Natural killer cell (primary cell): ENCODE measurements at regions of chr18 and their contacts with region 1.

Region 1: GRCh38 chr18:46173393-46174341 is 69.5 kb downstream of the HAUS1 start:
- DNase-seq: peak; percentile 90 to 95
- ATAC-seq: peak; percentile 85 to 97 (median 92)
- H3K4me3 ChIP-seq: peak overlapping the region; percentile 95
- H3K4me3 Mint-ChIP-seq: peak overlapping the region; percentile 100
- H3K27ac ChIP-seq: peak overlapping the region; percentile 80
- H3K27ac Mint-ChIP-seq: peak overlapping the region; percentile 96 to 99
- H3K4me1 ChIP-seq: peaks cover 28% of the 10 kb centered on the region
- H3K4me1 Mint-ChIP-seq: peaks cover 30 to 39% of the 10 kb centered on the region in 2 donors
- H3K27me3 ChIP-seq: no peaks in the 10 kb centered on the region
- H3K27me3 Mint-ChIP-seq: no peaks in the 10 kb centered on the region
- CTCF ChIP-seq: peak; percentile 94

Region 2: DNA sequence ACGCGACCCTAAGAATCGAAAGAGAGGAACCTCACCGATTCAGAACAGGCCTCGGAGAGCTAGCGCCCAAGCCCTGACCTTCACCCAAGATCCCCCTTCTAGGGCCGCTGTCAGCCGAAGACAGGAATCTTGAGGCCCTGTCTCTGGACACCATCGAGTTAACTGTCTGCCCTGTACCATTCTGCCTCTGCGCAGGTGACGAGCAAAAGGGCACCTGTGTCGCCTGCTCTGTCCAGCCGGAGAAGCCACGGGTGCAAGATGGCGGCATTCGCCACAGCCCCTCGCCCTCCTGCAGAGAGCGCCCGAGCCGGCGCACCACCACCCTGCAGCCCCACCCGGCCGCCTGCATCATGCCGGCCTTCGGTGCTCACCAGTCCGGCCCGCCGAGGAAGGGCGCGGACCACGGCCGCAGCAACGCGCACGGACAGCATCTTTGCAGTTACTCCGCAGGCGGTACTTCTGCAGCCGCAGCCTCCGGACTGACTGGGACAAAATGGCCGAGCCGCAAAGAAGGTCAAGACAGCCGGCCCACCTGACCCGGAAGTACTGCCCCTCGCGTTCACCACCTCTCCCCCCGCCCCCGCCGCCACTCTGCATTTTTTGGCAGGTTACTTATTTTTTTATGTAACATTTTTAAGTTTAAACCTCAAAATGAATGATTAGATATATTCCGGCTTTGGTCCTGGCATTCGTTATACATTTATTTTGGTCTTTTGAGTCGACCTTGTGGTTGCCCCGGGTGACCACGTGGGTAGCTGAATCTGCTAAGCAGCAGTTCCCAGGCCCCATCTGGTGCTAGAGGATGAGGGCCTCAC is 75.7 kb before region 1 on chr18 and contains the start of gene ATP5F1A:
- intact Hi-C with region 1: loop called (anchors 10 kb)
- DNase-seq: peak; percentile 84 to 92
- ATAC-seq: peak; percentile 90 to 94 (median 90)
- H3K4me3 ChIP-seq: peak within 1 kb of the TSS; percentile 71
- H3K4me3 Mint-ChIP-seq: peak within 1 kb of the TSS; percentile 98
- H3K27ac ChIP-seq: peak within 1 kb of the TSS; percentile 81
- H3K27ac Mint-ChIP-seq: peak within 1 kb of the TSS; percentile 94 to 95
- H3K4me1 ChIP-seq: peaks cover 25% of the 10 kb centered on the region
- H3K4me1 Mint-ChIP-seq: peaks cover 25 to 27% of the 10 kb centered on the region in 2 donors
- H3K27me3 ChIP-seq: no peaks in the 10 kb centered on the region
- H3K27me3 Mint-ChIP-seq: no peaks in the 10 kb centered on the region
- CTCF ChIP-seq: no peak
- total RNA-seq, gene ATP5F1A: 209 to 218 (median 218) TPM

Region 3: GRCh38 chr18:46213295-46213694 is 39.6 kb after region 1 on chr18:
- intact Hi-C with region 1: loop called (anchors 1 kb)
- DNase-seq: peak in 1 of 2 donors; percentile 61
- ATAC-seq: peak; percentile 65 to 73 (median 71)
- H3K4me3 ChIP-seq: no peak overlapping the region
- H3K4me3 Mint-ChIP-seq: peak overlapping the region; percentile 52
- H3K27ac ChIP-seq: no peak overlapping the region
- H3K27ac Mint-ChIP-seq: peak overlapping the region in 1 of 2 donors; percentile 63
- H3K4me1 ChIP-seq: peaks cover 12% of the 10 kb centered on the region
- H3K4me1 Mint-ChIP-seq: peaks cover 60 to 69% of the 10 kb centered on the region in 2 donors
- H3K27me3 ChIP-seq: no peaks in the 10 kb centered on the region
- H3K27me3 Mint-ChIP-seq: no peaks in the 10 kb centered on the region
- CTCF ChIP-seq: peak; percentile 71

Region 4: DNA sequence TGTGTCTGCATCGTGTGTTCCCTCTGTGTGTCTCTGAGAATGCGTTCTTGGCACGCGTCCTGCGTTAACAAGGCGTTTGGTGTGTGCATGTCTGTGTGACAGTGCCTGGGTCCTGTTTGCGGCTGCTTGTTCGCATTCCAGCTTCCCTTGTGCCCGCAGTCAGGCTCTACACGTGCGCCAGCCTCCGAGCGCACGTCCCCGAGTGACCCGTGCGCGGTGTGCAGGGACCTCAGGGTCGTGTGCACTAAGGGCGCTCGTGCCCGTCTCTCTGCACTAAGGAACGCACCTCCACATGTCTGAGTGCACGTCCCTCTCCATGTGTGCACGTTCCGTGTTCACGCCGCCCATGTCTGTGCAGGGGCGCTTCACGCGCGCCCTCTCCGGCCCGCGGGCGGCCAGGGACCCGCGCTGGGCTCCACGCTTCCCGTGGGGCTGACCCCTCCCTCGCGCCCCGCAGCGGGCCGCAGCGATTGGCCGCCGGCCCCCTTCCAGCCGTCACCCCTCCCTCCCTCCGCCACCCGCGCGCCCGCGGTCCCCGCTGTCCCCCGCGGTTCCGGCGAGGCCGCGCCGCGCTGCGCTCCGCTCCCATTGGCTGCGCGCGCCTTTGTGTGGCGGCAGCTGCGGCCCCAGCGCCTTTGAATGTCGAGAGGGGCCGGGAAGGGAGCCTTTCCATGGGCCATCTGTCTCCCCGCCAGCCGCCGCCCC is 159.9 kb after region 1 on chr18:
- intact Hi-C with region 1: loop called (anchors 1 kb)
- DNase-seq: peak; percentile 18 to 55
- ATAC-seq: peak; percentile 33 to 57 (median 56)
- H3K4me3 ChIP-seq: peak overlapping the region; percentile 40
- H3K4me3 Mint-ChIP-seq: peak overlapping the region; percentile 87
- H3K27ac ChIP-seq: no peak overlapping the region
- H3K27ac Mint-ChIP-seq: peak overlapping the region; percentile 64 to 78
- H3K4me1 ChIP-seq: peaks cover 45% of the 10 kb centered on the region
- H3K4me1 Mint-ChIP-seq: peaks cover 59% of the 10 kb centered on the region in 2 donors
- H3K27me3 ChIP-seq: no peaks in the 10 kb centered on the region
- H3K27me3 Mint-ChIP-seq: no peaks in the 10 kb centered on the region
- CTCF ChIP-seq: no peak

Region 5: DNA sequence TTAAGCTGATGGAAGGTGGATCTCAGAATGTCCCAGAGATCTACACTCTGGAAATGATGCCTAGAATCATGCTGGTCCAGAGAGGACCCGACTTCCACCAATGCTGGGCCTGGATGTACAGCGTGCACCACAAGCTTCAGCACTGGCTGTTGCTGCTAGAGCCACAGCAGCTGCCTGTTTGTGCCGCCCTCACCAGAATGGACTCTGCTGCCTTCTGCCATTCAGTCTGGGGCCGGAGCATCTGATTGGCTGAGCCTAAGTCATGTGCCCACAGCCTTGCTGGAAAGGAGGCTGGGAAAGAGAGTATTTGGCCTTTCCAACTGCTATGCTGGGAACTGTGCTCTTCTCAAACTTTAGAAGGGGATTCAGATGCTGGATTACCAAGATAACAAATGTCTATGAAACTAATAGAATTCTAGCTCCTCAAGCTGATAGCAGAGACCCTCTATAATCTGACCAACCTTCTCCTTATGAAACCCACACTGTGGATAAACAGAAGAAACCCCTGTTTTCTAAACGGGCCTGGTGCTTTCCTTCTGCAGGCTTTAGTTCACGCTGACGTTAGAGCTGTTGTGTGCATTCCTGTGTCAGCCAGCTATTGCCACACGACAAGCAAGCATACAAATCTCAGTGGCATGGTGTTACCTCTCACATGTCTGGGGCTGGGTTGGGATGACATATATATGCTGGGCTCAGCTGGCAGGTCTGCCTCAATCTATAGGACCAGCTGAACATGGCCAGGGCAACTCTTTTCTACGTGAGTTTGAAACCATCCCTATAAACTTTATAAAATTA is 487.5 kb after region 1 on chr18:
- intact Hi-C with region 1: loop called (anchors 1 kb)
- DNase-seq: no peak
- ATAC-seq: no peak
- H3K4me3 ChIP-seq: no peak overlapping the region
- H3K4me3 Mint-ChIP-seq: no peak overlapping the region
- H3K27ac ChIP-seq: no peak overlapping the region
- H3K27ac Mint-ChIP-seq: no peak overlapping the region
- H3K4me1 ChIP-seq: no peaks in the 10 kb centered on the region
- H3K4me1 Mint-ChIP-seq: no peaks in the 10 kb centered on the region
- H3K27me3 ChIP-seq: no peaks in the 10 kb centered on the region
- H3K27me3 Mint-ChIP-seq: peaks cover 2 to 12% of the 10 kb centered on the region in 2 donors
- CTCF ChIP-seq: no peak